Panc1 (cell line): ENCODE measurements at regions of chr2 and their contacts with region 1.

Region 1: GRCh38 chr2:190781604-190782198 is 98.9 kb upstream of the GLS start:
- DNase-seq: no peak
- ATAC-seq: peak; percentile 82
- H3K4me3 ChIP-seq: no peak overlapping the region
- H3K27ac ChIP-seq: no peak overlapping the region
- H3K4me1 ChIP-seq: no peaks in the 10 kb centered on the region
- H3K27me3 ChIP-seq: no peaks in the 10 kb centered on the region
- CTCF ChIP-seq: peak; percentile 73

Region 2: DNA sequence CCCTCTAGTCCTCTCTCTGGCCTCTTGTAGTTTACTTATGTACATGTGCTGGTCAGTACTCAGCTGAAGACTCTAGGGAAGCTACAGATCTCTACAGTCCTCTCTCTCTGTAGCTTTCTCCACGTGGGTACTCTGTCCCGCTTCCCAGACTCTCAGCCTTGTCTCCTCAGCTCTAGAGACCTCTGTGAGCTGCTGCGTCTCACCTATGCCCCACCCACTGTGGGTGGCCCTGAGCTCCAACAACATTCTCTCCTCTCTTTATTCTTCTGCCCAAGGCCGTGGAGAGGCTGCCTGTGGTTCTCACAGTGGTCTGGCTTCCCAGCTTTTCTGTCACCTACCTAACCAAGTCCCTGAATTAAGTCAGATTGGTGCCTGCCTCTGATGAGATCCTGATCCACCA is 340.1 kb before region 1 on chr2:
- CTCF ChIA-PET with region 1: interaction called, 10 read pairs
- POLR2A ChIA-PET with region 1: no interaction called
- in situ Hi-C with region 1: no loop called
- intact Hi-C with region 1: no loop called
- DNase-seq: no peak
- ATAC-seq: no peak
- H3K4me3 ChIP-seq: no peak overlapping the region
- H3K27ac ChIP-seq: no peak overlapping the region
- H3K4me1 ChIP-seq: no peaks in the 10 kb centered on the region
- H3K27me3 ChIP-seq: no peaks in the 10 kb centered on the region
- CTCF ChIP-seq: no peak

Region 3: DNA sequence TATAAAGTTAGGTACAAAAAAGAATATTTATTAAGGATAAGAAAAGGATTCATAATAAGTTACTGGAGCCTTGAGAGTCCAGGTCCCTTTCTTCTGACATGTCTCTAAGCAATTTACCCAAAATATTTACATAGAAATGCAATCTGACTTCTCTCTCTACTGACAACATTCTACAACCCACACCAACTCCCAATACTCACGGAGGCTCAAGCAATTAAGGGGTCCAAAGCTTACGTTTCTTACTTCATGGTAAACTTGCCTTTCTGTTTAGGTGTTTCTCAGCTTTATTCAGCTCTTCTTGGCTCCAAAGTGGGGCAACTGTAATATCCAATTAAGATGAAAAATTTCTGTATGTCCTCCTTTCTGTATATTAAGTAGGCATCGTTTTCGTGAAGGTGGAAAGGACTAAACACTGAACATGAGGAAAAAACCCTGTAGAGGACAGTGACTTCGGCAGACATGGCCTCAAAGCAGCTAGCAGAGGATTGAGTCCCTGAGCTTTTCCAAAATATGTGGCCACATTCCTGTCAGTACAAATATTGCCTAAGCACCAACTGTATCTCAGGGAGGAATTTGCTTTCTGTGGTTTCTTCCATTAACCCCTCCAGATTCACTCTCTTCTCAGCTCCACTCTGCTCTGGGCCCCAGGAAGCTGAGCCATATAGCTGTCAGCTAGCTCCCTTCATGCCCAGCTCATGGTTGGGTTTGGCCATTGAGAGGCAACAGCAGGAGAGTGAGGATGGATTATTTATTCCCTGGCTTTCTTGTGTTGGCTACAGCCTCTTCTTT is 31.0 kb after region 1 on chr2:
- CTCF ChIA-PET with region 1: no interaction called
- POLR2A ChIA-PET with region 1: no interaction called
- in situ Hi-C with region 1: no loop called
- intact Hi-C with region 1: no loop called
- DNase-seq: no peak
- ATAC-seq: no peak
- H3K4me3 ChIP-seq: no peak overlapping the region
- H3K27ac ChIP-seq: no peak overlapping the region
- H3K4me1 ChIP-seq: no peaks in the 10 kb centered on the region
- H3K27me3 ChIP-seq: no peaks in the 10 kb centered on the region; the same call in 1 of the 2 replicates
- CTCF ChIP-seq: no peak

Region 4: GRCh38 chr2:190961918-190962487 is 180.3 kb after region 1 on chr2:
- CTCF ChIA-PET with region 1: no interaction called
- POLR2A ChIA-PET with region 1: no interaction called
- in situ Hi-C with region 1: no loop called
- intact Hi-C with region 1: loop called (anchors 10 kb)
- DNase-seq: no peak
- ATAC-seq: no peak; the same call in 1 of the 2 replicates
- H3K4me3 ChIP-seq: no peak overlapping the region
- H3K27ac ChIP-seq: no peak overlapping the region
- H3K4me1 ChIP-seq: no peaks in the 10 kb centered on the region
- H3K27me3 ChIP-seq: no peaks in the 10 kb centered on the region
- CTCF ChIP-seq: no peak

Region 5: DNA sequence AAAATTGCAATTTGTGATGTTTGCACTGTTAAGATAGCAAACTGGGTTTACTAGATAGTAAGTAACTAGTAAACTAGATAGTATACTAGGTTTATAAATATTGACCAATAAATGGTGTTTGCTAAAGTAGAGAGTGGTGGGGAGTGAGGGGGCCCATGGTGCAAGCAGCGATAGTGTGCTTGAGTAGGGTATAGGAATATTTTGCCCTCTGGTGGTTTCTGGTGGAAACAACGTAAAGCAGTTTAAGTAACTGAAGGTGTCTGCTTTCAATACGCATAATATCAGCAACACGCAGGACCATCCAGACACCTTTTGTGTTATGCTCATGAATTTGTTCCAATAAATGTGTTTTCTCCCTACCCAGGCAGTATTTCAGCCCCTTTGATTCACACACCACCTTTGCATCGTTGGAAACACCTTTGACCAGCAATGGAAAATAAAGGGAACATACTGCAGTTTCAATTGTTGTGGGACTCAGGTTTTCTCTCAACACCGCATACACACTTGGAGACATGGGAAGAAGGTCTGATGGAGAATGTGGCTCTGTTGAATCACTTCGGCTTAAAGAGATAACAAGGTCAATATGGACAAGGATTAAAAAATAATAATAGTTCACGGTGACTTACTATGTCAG is 248.9 kb after region 1 on chr2:
- CTCF ChIA-PET with region 1: no interaction called
- POLR2A ChIA-PET with region 1: no interaction called
- in situ Hi-C with region 1: no loop called
- intact Hi-C with region 1: loop called (anchors 2 kb)
- DNase-seq: no peak
- ATAC-seq: peak; percentile 82
- H3K4me3 ChIP-seq: no peak overlapping the region
- H3K27ac ChIP-seq: no peak overlapping the region
- H3K4me1 ChIP-seq: no peaks in the 10 kb centered on the region
- H3K27me3 ChIP-seq: no peaks in the 10 kb centered on the region; the same call in none of the 2 replicates
- CTCF ChIP-seq: peak; percentile 81